ENCODE measurements at regions of chr2 and their contacts with region 1.

Region 1: GRCh38 chr2:219543601-219544358 is at the starts of genes CHPF and TMEM198:
- DNase-seq: peak; percentile 99
- H3K4me3 Mint-ChIP-seq: peak within 1 kb of the TSS; percentile 89
- H3K27ac Mint-ChIP-seq: peak within 1 kb of the TSS; percentile 75
- H3K4me1 Mint-ChIP-seq: peaks cover 17% of the 10 kb centered on the region
- H3K27me3 Mint-ChIP-seq: peaks cover 18% of the 10 kb centered on the region
- total RNA-seq, gene CHPF: 37.8 and 38.3 TPM in 2 replicates
- total RNA-seq, gene TMEM198: 3.1 and 3.4 TPM in 2 replicates

Region 2: DNA sequence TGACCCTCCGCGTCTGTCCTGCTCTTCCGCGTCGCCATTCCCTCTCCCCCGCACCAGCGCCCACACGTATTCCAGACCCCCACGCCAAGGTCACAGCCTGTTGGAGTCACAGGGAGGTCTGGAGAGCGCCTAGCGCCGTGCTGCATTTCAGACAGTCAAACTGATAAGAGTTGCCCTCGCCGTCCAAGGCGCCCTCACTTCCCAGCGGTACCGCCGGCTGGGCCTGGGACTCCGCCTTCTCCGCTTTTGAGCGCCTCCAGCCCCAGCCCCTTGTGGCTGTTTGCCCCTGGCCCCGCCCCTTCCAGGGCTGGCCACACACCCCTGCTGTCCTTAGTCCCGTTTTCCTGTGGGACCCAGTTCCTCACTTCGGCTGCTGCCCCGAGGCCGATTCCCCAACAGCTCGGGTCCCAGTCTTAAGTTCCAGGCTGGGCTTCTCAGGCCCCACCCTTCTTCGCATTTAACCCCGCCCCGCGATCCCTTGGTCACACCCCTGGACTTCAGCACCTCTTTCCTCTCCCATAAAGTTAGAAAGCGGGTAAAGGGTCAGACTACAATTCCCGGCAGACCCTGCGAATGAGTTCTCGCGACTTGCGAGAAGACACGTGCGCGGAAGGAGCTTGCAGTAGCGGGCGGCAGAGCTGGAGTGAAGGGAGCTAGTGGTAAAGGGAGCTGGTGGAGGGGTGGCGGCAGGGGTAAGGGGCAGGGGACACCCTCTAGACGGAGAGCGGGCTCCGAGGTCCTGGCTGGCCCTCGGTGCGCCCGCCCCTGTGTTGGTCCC is 45.3 kb before region 1 on chr2 and contains the start of gene GMPPA:
- intact Hi-C with region 1: loop called (anchors 1 kb)
- DNase-seq: peak; percentile 99
- H3K4me3 Mint-ChIP-seq: peak within 1 kb of the TSS; percentile 97
- H3K27ac Mint-ChIP-seq: peak within 1 kb of the TSS; percentile 83
- H3K4me1 Mint-ChIP-seq: peaks cover 26% of the 10 kb centered on the region
- H3K27me3 Mint-ChIP-seq: peaks cover 39% of the 10 kb centered on the region
- total RNA-seq, gene GMPPA: 45.5 and 46.0 TPM in 2 replicates

Region 3: DNA sequence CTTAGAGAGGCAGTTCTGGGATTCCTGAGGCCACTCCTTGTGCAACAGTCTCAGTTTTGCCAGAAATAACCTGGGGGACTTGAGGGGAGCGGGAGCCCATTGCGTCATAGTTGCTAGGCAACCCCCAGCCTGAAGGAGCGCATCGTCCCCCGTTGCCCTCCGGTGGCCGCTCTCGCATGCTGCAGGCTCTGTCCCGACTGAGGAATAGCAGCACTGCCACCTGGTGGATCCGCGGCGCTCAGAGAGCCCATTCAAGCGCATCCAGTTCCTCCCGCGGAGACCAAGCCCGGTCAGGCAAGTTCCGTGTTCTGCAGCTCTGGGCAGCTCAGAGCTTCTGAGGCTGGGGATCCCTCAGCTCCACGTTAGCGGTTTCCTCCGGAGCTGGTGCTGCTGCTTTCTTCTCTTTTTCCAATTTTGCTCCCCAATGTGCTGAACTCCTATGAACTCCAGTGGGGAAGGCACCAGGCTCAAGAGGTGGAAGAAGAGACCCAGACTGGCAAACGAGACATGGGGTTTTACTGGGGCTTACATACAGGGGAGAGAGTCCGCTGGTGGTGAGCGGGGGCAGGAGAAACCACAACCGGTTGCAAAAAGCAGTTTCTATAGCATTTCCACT is 98.8 kb after region 1 on chr2:
- intact Hi-C with region 1: loop called (anchors 1 kb)
- DNase-seq: peak; percentile 97
- H3K4me3 Mint-ChIP-seq: no peak overlapping the region
- H3K27ac Mint-ChIP-seq: no peak overlapping the region
- H3K4me1 Mint-ChIP-seq: no peaks in the 10 kb centered on the region
- H3K27me3 Mint-ChIP-seq: no peaks in the 10 kb centered on the region

Region 4: GRCh38 chr2:219689676-219690628 is 146.2 kb after region 1 on chr2:
- intact Hi-C with region 1: loop called (anchors 1 kb)
- DNase-seq: peak; percentile 83
- H3K4me3 Mint-ChIP-seq: no peak overlapping the region
- H3K27ac Mint-ChIP-seq: no peak overlapping the region
- H3K4me1 Mint-ChIP-seq: peaks cover 3% of the 10 kb centered on the region
- H3K27me3 Mint-ChIP-seq: peaks cover 22% of the 10 kb centered on the region